K562 (cell line): ENCODE measurements at regions of chr10 and their contacts with region 1.

Region 1: GRCh38 chr10:78021201-78021600 is 8.1 kb downstream of the POLR3A start:
- DNase-seq: no peak
- ATAC-seq: no peak
- H3K4me3 ChIP-seq: no peak overlapping the region
- H3K27ac ChIP-seq: no peak overlapping the region
- H3K4me1 ChIP-seq: no peaks in the 10 kb centered on the region
- H3K27me3 ChIP-seq: no peaks in the 10 kb centered on the region
- CTCF ChIP-seq: no peak
- EP300 ChIP-seq: no peak
- POLR2A ChIP-seq: no peak
- RAD21 ChIP-seq: no peak

Region 2: DNA sequence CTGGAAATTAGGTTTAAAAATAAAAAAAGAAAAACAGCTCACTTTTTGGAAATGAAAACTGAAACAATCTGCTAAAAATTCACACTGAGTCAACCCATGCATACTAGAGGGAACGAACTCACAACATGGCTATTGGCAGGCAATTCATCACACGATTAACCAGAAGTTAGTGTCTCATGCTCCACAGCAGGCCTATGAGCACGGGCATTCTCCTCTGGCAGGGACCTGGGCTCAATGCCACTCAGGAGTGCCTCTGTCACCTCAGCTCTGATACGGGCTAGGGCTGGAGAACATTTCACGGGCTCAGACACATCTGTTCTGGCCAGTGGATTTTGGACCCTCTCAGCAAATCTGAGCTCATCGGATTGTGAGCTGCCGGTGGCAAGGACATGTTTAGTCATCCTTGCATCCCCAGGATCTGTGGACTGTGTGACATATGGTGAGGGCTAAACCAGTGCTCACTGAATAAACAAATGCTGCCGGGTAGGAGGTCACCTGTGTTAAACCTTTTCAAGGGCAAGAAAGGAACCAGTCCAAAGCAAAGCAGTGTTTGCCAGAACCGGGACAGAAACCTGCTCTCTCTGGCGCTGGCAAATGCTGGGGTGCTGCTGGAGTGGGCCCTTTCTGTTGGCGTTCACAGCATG is 32.0 kb before region 1 on chr10:
- CTCF ChIA-PET with region 1: no interaction called
- POLR2A ChIA-PET with region 1: no interaction called
- in situ Hi-C with region 1: no loop called
- intact Hi-C with region 1: loop called (anchors 5 kb)
- DNase-seq: no peak
- ATAC-seq: no peak
- H3K4me3 ChIP-seq: no peak overlapping the region
- H3K27ac ChIP-seq: no peak overlapping the region
- H3K4me1 ChIP-seq: no peaks in the 10 kb centered on the region; a peak in 1 of 5 replicates
- H3K27me3 ChIP-seq: no peaks in the 10 kb centered on the region
- CTCF ChIP-seq: no peak
- EP300 ChIP-seq: no peak
- POLR2A ChIP-seq: no peak
- RAD21 ChIP-seq: no peak

Region 3: GRCh38 chr10:78066012-78066411 is 44.8 kb after region 1 on chr10:
- CTCF ChIA-PET with region 1: no interaction called
- POLR2A ChIA-PET with region 1: no interaction called
- in situ Hi-C with region 1: no loop called
- intact Hi-C with region 1: no loop called
- DNase-seq: peak in 2 of 4 experiments; percentile 31 to 41
- ATAC-seq: no peak
- H3K4me3 ChIP-seq: no peak overlapping the region
- H3K27ac ChIP-seq: no peak overlapping the region
- H3K4me1 ChIP-seq: no peaks in the 10 kb centered on the region
- H3K27me3 ChIP-seq: peaks cover 19 to 56% of the 10 kb centered on the region in 2 experiments; a peak in 4 of 5 replicates
- CTCF ChIP-seq: no peak
- EP300 ChIP-seq: no peak
- POLR2A ChIP-seq: no peak
- RAD21 ChIP-seq: no peak

Region 4: DNA sequence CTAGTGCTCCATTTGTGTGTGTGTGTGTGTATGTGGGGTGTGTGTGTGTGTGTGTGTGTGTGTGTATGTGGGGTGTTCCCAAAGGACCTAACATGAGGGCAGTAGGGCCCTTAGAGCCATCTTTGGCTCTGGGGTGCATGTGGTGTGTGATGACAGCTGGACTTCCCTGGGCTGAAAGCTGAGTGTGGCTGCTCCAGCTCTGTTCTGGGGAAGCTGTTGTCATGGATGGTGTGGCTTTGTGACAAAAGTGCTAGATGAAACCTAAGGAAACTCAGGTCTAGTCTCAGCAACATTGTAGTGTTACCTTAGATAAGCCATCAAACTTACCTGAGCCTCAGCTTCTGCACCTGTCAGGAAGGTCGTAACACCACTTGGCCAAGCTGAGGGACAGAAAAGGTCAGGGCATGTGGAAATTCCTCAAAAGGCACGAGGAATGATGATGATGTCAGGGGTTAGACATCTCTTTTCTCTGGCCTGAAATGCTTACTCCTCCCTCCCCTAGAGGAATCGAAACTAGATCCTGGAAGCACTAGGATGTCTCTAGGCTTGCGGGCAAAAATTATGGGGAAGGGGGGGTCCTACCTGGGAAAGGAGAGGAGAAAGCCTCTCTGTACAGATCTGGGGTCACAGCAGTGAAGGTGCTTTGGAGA is 127.9 kb after region 1 on chr10:
- CTCF ChIA-PET with region 1: no interaction called
- POLR2A ChIA-PET with region 1: no interaction called
- in situ Hi-C with region 1: no loop called
- intact Hi-C with region 1: no loop called
- DNase-seq: no peak
- ATAC-seq: no peak
- H3K4me3 ChIP-seq: no peak overlapping the region
- H3K27ac ChIP-seq: no peak overlapping the region
- H3K4me1 ChIP-seq: no peaks in the 10 kb centered on the region
- H3K27me3 ChIP-seq: no peaks in the 10 kb centered on the region
- CTCF ChIP-seq: no peak
- EP300 ChIP-seq: no peak
- POLR2A ChIP-seq: no peak
- RAD21 ChIP-seq: no peak